GM12878 (cell line): ENCODE measurements at regions of chr9 and their contacts with region 1.

Region 1: GRCh38 chr9:4792572-4793458 is at the start of gene RCL1:
- DNase-seq: peak; percentile 83
- ATAC-seq: peak; percentile 97
- H3K4me3 ChIP-seq: peak within 1 kb of the TSS; percentile 82
- H3K27ac ChIP-seq: peak within 1 kb of the TSS; percentile 82
- H3K4me1 ChIP-seq: peaks cover 7% of the 10 kb centered on the region
- H3K27me3 ChIP-seq: no peaks in the 10 kb centered on the region
- CTCF ChIP-seq: no peak
- EP300 ChIP-seq: no peak
- POLR2A ChIP-seq: peak; percentile 97
- RAD21 ChIP-seq: peak; percentile 6; the same call in 1 of the 2 replicates
- polyA plus RNA-seq, gene RCL1: 21.1 to 28.6 TPM

Region 2: GRCh38 chr9:4750023-4750673 is 42.7 kb before region 1 on chr9:
- CTCF ChIA-PET with region 1: no interaction called
- POLR2A ChIA-PET with region 1: no interaction called
- RAD21 ChIA-PET with region 1: no interaction called
- SMC1A ChIA-PET with region 1: no interaction called
- in situ Hi-C with region 1: no loop called
- intact Hi-C with region 1: no loop called
- DNase-seq: no peak
- ATAC-seq: peak; percentile 86
- H3K4me3 ChIP-seq: no peak overlapping the region
- H3K27ac ChIP-seq: no peak overlapping the region
- H3K4me1 ChIP-seq: peaks cover 4% of the 10 kb centered on the region; the same call in 1 of the 2 replicates
- H3K27me3 ChIP-seq: no peaks in the 10 kb centered on the region
- CTCF ChIP-seq: peak; percentile 54 to 59 (median 58); a peak in 5 of 6 replicates
- EP300 ChIP-seq: no peak
- POLR2A ChIP-seq: no peak
- RAD21 ChIP-seq: peak; percentile 72

Region 3: GRCh38 chr9:4814913-4815312 is 22.1 kb after region 1 on chr9:
- CTCF ChIA-PET with region 1: interaction called, 17 read pairs
- POLR2A ChIA-PET with region 1: interaction called, 9 read pairs
- RAD21 ChIA-PET with region 1: interaction called, 11 read pairs
- SMC1A ChIA-PET with region 1: interaction called, 16 read pairs
- in situ Hi-C with region 1: no loop called
- intact Hi-C with region 1: no loop called
- DNase-seq: peak; percentile 77
- ATAC-seq: peak; percentile 74
- H3K4me3 ChIP-seq: peak overlapping the region; percentile 25; the same call in 1 of the 2 replicates
- H3K27ac ChIP-seq: peak overlapping the region; percentile 79
- H3K4me1 ChIP-seq: peaks cover 23% of the 10 kb centered on the region
- H3K27me3 ChIP-seq: no peaks in the 10 kb centered on the region
- CTCF ChIP-seq: no peak
- EP300 ChIP-seq: peak in 1 of 2 experiments; percentile 51; a peak in 2 of 4 replicates
- POLR2A ChIP-seq: no peak
- RAD21 ChIP-seq: no peak

Region 4: DNA sequence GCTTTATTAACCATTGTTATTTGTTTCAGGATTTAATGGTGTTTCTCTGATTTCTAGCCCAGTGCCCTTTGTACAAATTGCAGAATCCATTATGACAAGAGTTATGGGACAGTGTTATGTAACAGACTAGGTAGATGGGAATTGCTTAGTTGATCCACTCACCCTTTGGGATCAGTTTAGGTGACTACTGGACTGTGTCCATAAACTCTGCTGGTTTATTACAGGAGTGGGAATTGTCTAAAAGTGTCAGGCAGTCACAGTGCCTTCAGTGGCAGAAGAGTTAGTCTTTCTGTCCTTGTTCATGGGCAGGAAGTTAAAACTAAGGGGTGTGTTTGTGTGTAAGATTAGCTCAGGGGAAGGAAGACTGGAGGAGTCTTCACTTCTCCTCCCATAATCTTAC is 29.2 kb after region 1 on chr9:
- CTCF ChIA-PET with region 1: interaction called, 12 read pairs
- POLR2A ChIA-PET with region 1: interaction called, 8 read pairs
- RAD21 ChIA-PET with region 1: interaction called, 5 read pairs
- SMC1A ChIA-PET with region 1: interaction called, 12 read pairs
- in situ Hi-C with region 1: no loop called
- intact Hi-C with region 1: no loop called
- DNase-seq: no peak
- ATAC-seq: peak; percentile 63
- H3K4me3 ChIP-seq: no peak overlapping the region
- H3K27ac ChIP-seq: peak overlapping the region; percentile 22; the same call in 1 of the 2 replicates
- H3K4me1 ChIP-seq: peaks cover 8% of the 10 kb centered on the region
- H3K27me3 ChIP-seq: no peaks in the 10 kb centered on the region
- CTCF ChIP-seq: no peak
- EP300 ChIP-seq: no peak
- POLR2A ChIP-seq: no peak
- RAD21 ChIP-seq: no peak

Region 5: GRCh38 chr9:4832786-4833579 is 40.2 kb after region 1 on chr9:
- CTCF ChIA-PET with region 1: interaction called, 3 read pairs
- POLR2A ChIA-PET with region 1: interaction called, 4 read pairs
- RAD21 ChIA-PET with region 1: interaction called, 10 read pairs
- SMC1A ChIA-PET with region 1: interaction called, 12 read pairs
- in situ Hi-C with region 1: no loop called
- intact Hi-C with region 1: no loop called
- DNase-seq: no peak
- ATAC-seq: no peak
- H3K4me3 ChIP-seq: no peak overlapping the region
- H3K27ac ChIP-seq: no peak overlapping the region
- H3K4me1 ChIP-seq: no peaks in the 10 kb centered on the region
- H3K27me3 ChIP-seq: no peaks in the 10 kb centered on the region
- CTCF ChIP-seq: no peak
- EP300 ChIP-seq: no peak
- POLR2A ChIP-seq: no peak
- RAD21 ChIP-seq: no peak